ENCODE measurements at regions of chr6 and their contacts with region 1.

Region 1: GRCh38 chr6:19472847-19473246 is 364.3 kb upstream of the ID4 start:
- DNase-seq: no peak
- H3K4me3 ChIP-seq: no peak overlapping the region
- H3K27ac ChIP-seq: no peak overlapping the region
- H3K4me1 ChIP-seq: no peaks in the 10 kb centered on the region
- H3K27me3 ChIP-seq: no peaks in the 10 kb centered on the region
- CTCF ChIP-seq: no peak

Region 2: GRCh38 chr6:18343741-18344140 is 1129.1 kb before region 1 on chr6:
- intact Hi-C with region 1: no loop called
- DNase-seq: no peak
- H3K4me3 ChIP-seq: no peak overlapping the region
- H3K27ac ChIP-seq: no peak overlapping the region
- H3K4me1 ChIP-seq: peaks cover 0 to 2% of the 10 kb centered on the region in 2 donors
- H3K27me3 ChIP-seq: no peaks in the 10 kb centered on the region
- CTCF ChIP-seq: no peak

Region 3: GRCh38 chr6:19613681-19614080 is 140.8 kb after region 1 on chr6:
- intact Hi-C with region 1: loop called (anchors 10 kb)
- DNase-seq: no peak
- H3K4me3 ChIP-seq: no peak overlapping the region
- H3K27ac ChIP-seq: no peak overlapping the region
- H3K4me1 ChIP-seq: no peaks in the 10 kb centered on the region
- H3K27me3 ChIP-seq: no peaks in the 10 kb centered on the region
- CTCF ChIP-seq: no peak

Measured in ascending aorta (tissue), 2 donors.